Ovary (tissue), 10 donors: ENCODE measurements at regions of chr2 and their contacts with region 1.

Region 1: GRCh38 chr2:127640082-127641072 is 5.6 kb upstream of the GPR17 start:
- DNase-seq: no peak
- H3K4me3 ChIP-seq: no peak overlapping the region
- H3K27ac ChIP-seq: no peak overlapping the region
- H3K4me1 ChIP-seq: peaks cover 4% of the 10 kb centered on the region
- H3K27me3 ChIP-seq: no peaks in the 10 kb centered on the region
- CTCF ChIP-seq: no peak
- EP300 ChIP-seq: no peak
- POLR2A ChIP-seq: no peak

Region 2: DNA sequence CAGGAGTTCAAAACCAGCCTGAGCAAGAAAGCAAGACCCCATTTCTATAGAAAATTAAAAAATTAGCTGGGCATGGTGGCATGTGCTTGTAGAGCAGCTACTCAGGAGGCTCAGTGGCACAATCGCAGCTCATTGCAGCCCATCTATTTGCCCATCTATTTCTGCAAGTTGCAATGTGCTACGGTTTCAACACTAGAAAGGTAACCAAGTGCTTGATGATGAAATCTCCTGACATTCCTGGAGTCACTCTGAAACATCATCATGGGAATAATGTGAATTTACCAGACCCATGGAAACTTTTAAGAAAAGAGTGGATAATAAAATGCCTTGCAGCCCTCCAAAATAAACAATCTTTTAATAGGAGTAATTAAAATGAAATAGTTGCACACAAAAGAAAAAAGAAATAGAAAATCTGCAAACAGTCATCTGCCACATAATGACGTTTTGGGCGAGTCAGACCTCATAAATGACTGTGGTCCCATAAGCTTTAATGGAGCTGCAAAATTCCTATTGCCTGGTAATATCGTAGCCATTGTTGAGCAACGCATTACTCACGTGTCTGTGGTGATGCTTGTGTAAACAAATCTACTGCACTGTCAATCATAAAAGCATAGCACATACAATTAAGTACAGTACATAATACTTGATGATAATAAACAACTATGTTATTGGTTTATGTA is 292.0 kb after region 1 on chr2:
- intact Hi-C with region 1: no loop called
- DNase-seq: no peak
- H3K4me3 ChIP-seq: no peak overlapping the region
- H3K27ac ChIP-seq: no peak overlapping the region
- H3K4me1 ChIP-seq: no peaks in the 10 kb centered on the region
- H3K27me3 ChIP-seq: no peaks in the 10 kb centered on the region
- CTCF ChIP-seq: no peak
- EP300 ChIP-seq: no peak
- POLR2A ChIP-seq: no peak

Region 3: GRCh38 chr2:129627437-129627836 is 1987.1 kb after region 1 on chr2:
- intact Hi-C with region 1: loop called in 1 of 4 experiments (anchors 5 kb)
- DNase-seq: no peak
- H3K4me3 ChIP-seq: no peak overlapping the region
- H3K27ac ChIP-seq: no peak overlapping the region
- H3K4me1 ChIP-seq: no peaks in the 10 kb centered on the region
- H3K27me3 ChIP-seq: no peaks in the 10 kb centered on the region
- CTCF ChIP-seq: no peak
- EP300 ChIP-seq: no peak
- POLR2A ChIP-seq: no peak